ENCODE measurements at regions of chr7 and their contacts with region 1.

Region 1: GRCh38 chr7:3065724-3066143 is 22.1 kb upstream of the CARD11 start:
- DNase-seq: no peak
- ATAC-seq: peak; percentile 62
- H3K4me3 ChIP-seq: peak overlapping the region; percentile 13; the same call in 1 of the 2 replicates
- H3K27ac ChIP-seq: no peak overlapping the region
- H3K4me1 ChIP-seq: peaks cover 47% of the 10 kb centered on the region
- H3K27me3 ChIP-seq: no peaks in the 10 kb centered on the region
- CTCF ChIP-seq: peak; percentile 59 to 90 (median 78)
- EP300 ChIP-seq: no peak
- POLR2A ChIP-seq: no peak
- RAD21 ChIP-seq: peak; percentile 70

Region 2: DNA sequence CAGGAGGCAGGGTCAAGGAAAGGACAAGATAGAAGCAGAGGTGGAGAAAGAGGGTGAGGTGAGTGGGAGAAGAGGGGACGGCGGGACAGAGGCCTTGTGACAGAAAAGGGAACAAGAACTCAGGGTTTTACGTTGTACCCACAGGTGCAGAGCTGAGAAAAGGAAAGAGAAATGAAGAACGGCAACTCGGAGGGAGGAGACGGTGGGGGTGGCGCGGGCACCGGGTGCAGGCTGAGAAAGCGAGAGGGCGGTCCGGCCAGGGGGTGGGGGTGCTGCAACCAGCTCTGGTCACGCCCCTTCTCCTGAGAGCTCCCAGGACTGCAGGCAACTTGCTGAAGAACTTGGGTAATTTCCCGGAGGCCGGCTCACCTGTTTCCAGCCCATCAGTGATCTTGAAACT is 87.3 kb before region 1 on chr7:
- CTCF ChIA-PET with region 1: interaction called, 4 read pairs
- POLR2A ChIA-PET with region 1: interaction called, 3 read pairs
- RAD21 ChIA-PET with region 1: interaction called, 8 read pairs
- SMC1A ChIA-PET with region 1: interaction called, 18 read pairs
- in situ Hi-C with region 1: no loop called
- intact Hi-C with region 1: no loop called
- DNase-seq: peak; percentile 91
- ATAC-seq: peak; percentile 93
- H3K4me3 ChIP-seq: peak overlapping the region; percentile 60
- H3K27ac ChIP-seq: peak overlapping the region; percentile 78
- H3K4me1 ChIP-seq: peaks cover 44% of the 10 kb centered on the region
- H3K27me3 ChIP-seq: no peaks in the 10 kb centered on the region
- CTCF ChIP-seq: no peak
- EP300 ChIP-seq: peak; percentile 88 to 92; a peak in 3 of 4 replicates
- POLR2A ChIP-seq: no peak
- RAD21 ChIP-seq: no peak

Region 3: GRCh38 chr7:3055626-3056025 is 10.1 kb before region 1 on chr7:
- CTCF ChIA-PET with region 1: interaction called, 10 read pairs
- POLR2A ChIA-PET with region 1: interaction called, 3 read pairs
- RAD21 ChIA-PET with region 1: interaction called, 3 read pairs
- SMC1A ChIA-PET with region 1: interaction called, 3 read pairs
- in situ Hi-C with region 1: no loop called
- intact Hi-C with region 1: no loop called
- DNase-seq: no peak
- ATAC-seq: no peak
- H3K4me3 ChIP-seq: no peak overlapping the region
- H3K27ac ChIP-seq: no peak overlapping the region
- H3K4me1 ChIP-seq: no peaks in the 10 kb centered on the region
- H3K27me3 ChIP-seq: no peaks in the 10 kb centered on the region; a peak in 1 of 4 replicates
- CTCF ChIP-seq: no peak
- EP300 ChIP-seq: no peak
- POLR2A ChIP-seq: no peak
- RAD21 ChIP-seq: no peak

Region 4: DNA sequence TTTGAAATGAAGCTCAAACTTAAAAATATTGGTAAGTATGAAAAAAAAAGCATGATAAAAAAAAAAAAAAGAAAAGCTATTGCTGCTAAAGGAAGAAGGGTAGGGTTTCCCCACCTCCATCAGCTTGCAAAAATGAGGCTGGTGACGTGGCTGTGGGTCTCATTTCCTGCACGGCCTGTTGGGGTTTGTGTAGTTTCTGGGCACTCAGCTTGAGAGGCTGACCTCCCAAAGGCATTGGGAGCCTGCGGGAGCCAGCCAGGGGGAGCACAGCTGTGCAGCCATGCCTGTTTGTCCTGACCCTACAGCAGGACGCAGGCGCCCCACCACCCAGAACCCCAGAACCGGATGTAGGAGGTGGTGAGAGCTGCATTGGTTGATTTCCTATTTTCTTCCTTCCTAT is 26.7 kb after region 1 on chr7:
- CTCF ChIA-PET with region 1: interaction called, 40 read pairs
- POLR2A ChIA-PET with region 1: interaction called, 15 read pairs
- RAD21 ChIA-PET with region 1: interaction called, 38 read pairs
- SMC1A ChIA-PET with region 1: interaction called, 67 read pairs
- in situ Hi-C with region 1: no loop called
- intact Hi-C with region 1: no loop called
- DNase-seq: peak; percentile 63
- ATAC-seq: peak; percentile 87
- H3K4me3 ChIP-seq: no peak overlapping the region
- H3K27ac ChIP-seq: peak overlapping the region; percentile 21; the same call in 1 of the 2 replicates
- H3K4me1 ChIP-seq: peaks cover 16% of the 10 kb centered on the region
- H3K27me3 ChIP-seq: no peaks in the 10 kb centered on the region
- CTCF ChIP-seq: no peak
- EP300 ChIP-seq: no peak
- POLR2A ChIP-seq: peak; percentile 54
- RAD21 ChIP-seq: no peak

Region 5: DNA sequence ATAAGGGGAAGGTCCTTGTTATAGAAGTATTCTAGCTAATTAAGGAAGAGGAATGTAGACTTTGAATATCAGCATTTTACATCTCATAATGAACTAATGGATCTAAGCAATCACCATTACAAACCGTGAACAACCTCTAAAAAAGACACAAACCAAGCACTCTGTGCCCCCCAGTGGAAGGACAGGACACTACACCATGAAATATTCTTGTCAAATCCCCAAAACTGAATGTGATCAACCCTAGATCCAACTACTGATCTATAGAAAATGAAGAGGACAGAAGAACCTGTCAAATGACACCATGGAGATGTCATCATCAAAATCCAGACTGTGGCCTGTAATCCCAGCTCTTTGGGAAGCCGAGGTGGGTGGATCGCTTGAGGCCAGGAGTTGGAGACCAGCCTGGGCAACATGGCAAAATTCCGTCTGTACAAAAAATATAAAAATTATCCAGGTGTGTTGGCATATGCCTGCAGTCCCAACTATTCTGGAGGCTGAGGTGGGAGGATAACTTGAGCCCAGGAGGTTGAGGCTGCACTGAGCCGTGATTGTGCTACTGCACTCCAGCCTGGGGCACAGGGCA is 89.3 kb after region 1 on chr7:
- CTCF ChIA-PET with region 1: interaction called, 72 read pairs
- POLR2A ChIA-PET with region 1: interaction called, 5 read pairs
- RAD21 ChIA-PET with region 1: interaction called, 19 read pairs
- SMC1A ChIA-PET with region 1: interaction called, 43 read pairs
- in situ Hi-C with region 1: no loop called
- intact Hi-C with region 1: loop called (anchors 1 kb)
- DNase-seq: peak; percentile 15
- ATAC-seq: peak; percentile 75
- H3K4me3 ChIP-seq: no peak overlapping the region
- H3K27ac ChIP-seq: no peak overlapping the region
- H3K4me1 ChIP-seq: no peaks in the 10 kb centered on the region
- H3K27me3 ChIP-seq: no peaks in the 10 kb centered on the region
- CTCF ChIP-seq: peak; percentile 74 to 78 (median 77)
- EP300 ChIP-seq: no peak
- POLR2A ChIP-seq: no peak
- RAD21 ChIP-seq: peak; percentile 94

Measured in GM12878 (cell line).